Naive thymus-derived CD4-positive, alpha-beta T cell (primary cell): ENCODE measurements at regions of chr19 and their contacts with region 1.

Region 1: DNA sequence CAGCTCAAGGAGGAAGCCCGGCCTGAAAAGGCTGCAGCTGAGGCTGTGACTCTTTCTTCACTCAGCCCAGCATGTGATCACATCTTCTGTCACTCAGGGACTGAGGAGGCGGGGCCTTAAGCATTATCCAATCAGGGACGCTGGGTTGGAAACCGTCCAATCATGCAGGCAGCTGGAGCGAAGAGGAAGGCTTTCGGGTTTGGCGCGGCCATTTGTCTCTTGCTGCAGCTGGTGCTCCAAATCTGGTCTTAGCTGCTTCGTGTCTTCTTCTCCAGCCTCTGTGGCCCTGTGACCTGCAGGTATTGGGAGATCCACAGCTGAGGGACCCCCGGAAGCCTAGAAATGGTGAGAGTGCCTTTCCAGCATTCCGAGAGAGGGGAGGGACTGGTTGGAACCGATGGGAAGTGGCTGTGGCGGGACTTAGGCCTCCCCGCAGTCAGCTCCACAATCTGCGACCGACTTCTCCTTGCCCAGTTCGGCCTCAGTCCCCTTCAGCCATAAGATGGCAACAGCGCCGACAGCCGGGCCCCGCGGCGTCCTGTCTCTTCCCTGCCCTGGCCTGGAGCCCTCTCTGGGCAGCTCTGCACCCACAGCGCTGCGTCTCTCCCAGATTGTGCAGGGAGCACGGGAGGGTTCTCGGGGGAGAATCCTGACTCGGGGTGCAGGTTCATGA is at the start of gene ZNF90:
- DNase-seq: peak; percentile 57 to 90 (median 84)
- ATAC-seq: peak; percentile 99
- H3K4me3 ChIP-seq: peak within 1 kb of the TSS; percentile 86
- H3K4me3 Mint-ChIP-seq: peak within 1 kb of the TSS; percentile 86 to 89 (median 88)
- H3K27ac ChIP-seq: no peak within 1 kb of the TSS
- H3K27ac Mint-ChIP-seq: peak within 1 kb of the TSS; percentile 31 to 82 (median 54)
- H3K4me1 ChIP-seq: peaks cover 4 to 8% of the 10 kb centered on the region in 2 donors
- H3K4me1 Mint-ChIP-seq: peaks cover 0 to 27% (median 14%) of the 10 kb centered on the region in 7 donors
- H3K27me3 ChIP-seq: no peaks in the 10 kb centered on the region
- H3K27me3 Mint-ChIP-seq: no peaks in the 10 kb centered on the region
- total RNA-seq, gene ZNF90: 3.4 to 7.7 (median 4.5) TPM

Region 2: GRCh38 chr19:20051841-20052768 is 25.8 kb before region 1 on chr19:
- CTCF ChIA-PET with region 1: no interaction called
- POLR2A ChIA-PET with region 1: interaction called, 11 read pairs
- intact Hi-C with region 1: loop called in 1 of 2 experiments (anchors 1 kb)
- DNase-seq: peak; percentile 17 to 50 (median 44)
- ATAC-seq: peak; percentile 93
- H3K4me3 ChIP-seq: peak overlapping the region; percentile 98
- H3K4me3 Mint-ChIP-seq: peak overlapping the region; percentile 95 to 100 (median 98)
- H3K27ac ChIP-seq: peak overlapping the region; percentile 77
- H3K27ac Mint-ChIP-seq: peak overlapping the region; percentile 83 to 97 (median 94)
- H3K4me1 ChIP-seq: peaks cover 8% of the 10 kb centered on the region in 2 donors
- H3K4me1 Mint-ChIP-seq: peaks cover 0 to 17% (median 8%) of the 10 kb centered on the region in 7 donors
- H3K27me3 ChIP-seq: no peaks in the 10 kb centered on the region
- H3K27me3 Mint-ChIP-seq: peaks cover 0 to 4% (median 0%) of the 10 kb centered on the region in 5 donors

Region 3: DNA sequence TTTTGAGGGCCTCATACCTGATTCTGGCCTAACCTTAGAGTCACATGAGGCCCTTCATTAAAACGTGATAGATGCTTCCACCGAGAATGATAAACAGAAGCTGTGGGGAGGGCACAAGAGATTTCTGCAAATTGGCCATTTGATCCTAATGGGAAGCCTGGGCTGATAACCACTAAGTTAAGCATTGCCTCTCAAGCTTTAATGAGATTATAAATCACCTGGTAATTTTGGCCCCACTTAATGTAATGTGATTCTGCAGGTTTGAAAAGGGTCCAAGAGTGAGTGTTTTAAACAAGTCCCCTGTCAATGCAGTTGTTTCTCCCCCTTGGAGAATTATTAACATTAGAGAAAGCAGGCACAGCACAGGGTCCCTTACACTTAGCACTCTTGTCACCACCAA is 131.1 kb after region 1 on chr19:
- CTCF ChIA-PET with region 1: no interaction called
- POLR2A ChIA-PET with region 1: no interaction called
- intact Hi-C with region 1: no loop called
- DNase-seq: no peak
- ATAC-seq: no peak
- H3K4me3 ChIP-seq: no peak overlapping the region
- H3K4me3 Mint-ChIP-seq: no peak overlapping the region
- H3K27ac ChIP-seq: no peak overlapping the region
- H3K27ac Mint-ChIP-seq: no peak overlapping the region
- H3K4me1 ChIP-seq: no peaks in the 10 kb centered on the region
- H3K4me1 Mint-ChIP-seq: no peaks in the 10 kb centered on the region
- H3K27me3 ChIP-seq: no peaks in the 10 kb centered on the region
- H3K27me3 Mint-ChIP-seq: no peaks in the 10 kb centered on the region